OCI-LY7 (cell line): ENCODE measurements at regions of chr3 and their contacts with region 1.

Region 1: DNA sequence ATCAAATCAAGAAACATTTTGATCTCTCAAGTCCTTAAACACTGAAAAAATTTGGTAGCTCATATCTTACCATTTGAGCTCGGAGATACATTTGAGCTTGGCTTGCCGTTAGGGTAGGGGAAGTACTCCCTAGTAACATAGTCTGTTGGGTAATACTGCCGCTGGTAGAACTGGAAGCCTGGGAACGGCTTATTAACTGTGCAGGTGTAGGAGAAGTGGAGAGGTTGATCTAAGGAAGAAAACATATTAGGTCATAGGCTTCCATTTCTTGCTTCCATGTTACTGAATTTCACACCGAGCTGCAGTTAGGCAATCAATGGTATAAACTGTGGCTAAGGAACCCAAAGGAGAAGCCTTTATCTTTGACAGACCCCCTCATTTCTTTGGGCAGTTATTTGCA is 32.5 kb downstream of the PHC3 start:
- DNase-seq: no peak
- H3K4me3 ChIP-seq: no peak overlapping the region
- H3K27ac ChIP-seq: no peak overlapping the region
- H3K4me1 ChIP-seq: peaks cover 54% of the 10 kb centered on the region
- CTCF ChIP-seq: no peak

Region 2: DNA sequence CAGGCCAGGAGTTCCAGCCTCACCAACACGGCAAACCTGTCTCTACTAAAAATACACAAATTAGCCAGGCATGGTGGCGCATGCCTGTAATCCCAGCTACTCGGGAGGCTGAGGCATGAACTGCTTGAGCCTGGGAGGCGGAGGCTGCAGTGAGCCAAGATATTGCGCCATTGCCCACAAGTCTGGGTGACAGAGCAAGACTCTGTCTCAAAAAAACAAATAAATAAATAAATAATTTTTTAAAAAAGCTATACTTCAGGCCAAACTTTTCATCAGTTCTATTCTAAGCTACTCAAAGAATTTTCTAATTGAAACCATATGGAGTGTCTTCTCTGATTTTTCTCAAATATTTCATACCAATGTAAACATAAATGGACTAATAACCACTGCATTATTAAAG is 11.0 kb before region 1 on chr3:
- CTCF ChIA-PET with region 1: interaction called, 3 read pairs
- POLR2A ChIA-PET with region 1: interaction called, 12 read pairs
- intact Hi-C with region 1: no loop called
- DNase-seq: no peak
- H3K4me3 ChIP-seq: no peak overlapping the region
- H3K27ac ChIP-seq: no peak overlapping the region
- H3K4me1 ChIP-seq: peaks cover 16% of the 10 kb centered on the region
- CTCF ChIP-seq: no peak

Region 3: DNA sequence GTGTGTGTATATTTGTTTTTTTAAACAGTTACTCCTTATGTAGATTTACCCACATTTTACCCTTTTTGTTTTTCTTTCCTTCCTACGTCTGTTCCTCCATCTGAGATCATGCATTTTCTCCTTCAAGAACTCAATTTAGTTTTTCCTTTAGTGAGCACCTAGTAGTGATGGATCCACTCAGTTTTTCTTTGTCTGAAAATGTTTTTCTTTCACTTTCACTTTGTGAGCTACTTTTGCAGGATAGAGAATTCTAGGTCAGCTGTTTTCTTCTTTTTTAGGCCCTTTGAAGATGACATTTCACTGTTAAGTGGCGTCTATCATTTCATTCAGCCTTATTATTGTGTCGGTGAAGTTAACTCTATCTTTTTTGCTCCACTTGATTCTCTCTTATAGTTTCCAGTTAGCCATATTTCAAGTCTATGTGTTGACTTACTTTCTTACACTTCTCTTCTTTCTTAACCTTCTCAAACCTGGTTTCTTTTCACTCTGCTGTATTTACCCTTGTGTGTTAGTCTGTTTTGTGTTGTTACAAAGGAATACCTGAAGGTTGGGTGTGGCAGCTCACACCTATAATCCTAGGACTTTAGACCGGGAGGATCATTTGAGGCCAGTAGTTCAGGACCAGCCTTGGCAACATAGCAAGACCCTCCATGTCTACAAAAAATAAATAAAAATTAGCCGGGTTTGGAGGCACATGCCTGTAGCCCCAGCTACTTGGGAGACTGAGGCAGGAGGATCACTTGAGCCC is 129.0 kb after region 1 on chr3:
- CTCF ChIA-PET with region 1: no interaction called
- POLR2A ChIA-PET with region 1: no interaction called
- intact Hi-C with region 1: no loop called
- DNase-seq: peak; percentile 9
- H3K4me3 ChIP-seq: no peak overlapping the region
- H3K27ac ChIP-seq: no peak overlapping the region
- H3K4me1 ChIP-seq: peaks cover 19% of the 10 kb centered on the region
- CTCF ChIP-seq: no peak